Heart right ventricle (tissue), 16 donors: ENCODE measurements at regions of chr15 and their contacts with region 1.

Region 1: GRCh38 chr15:46865155-46865554 is 852.1 kb upstream of the SEMA6D start:
- DNase-seq: no peak
- ATAC-seq: peak in 6 of 8 donors; percentile 50 to 99 (median 80)
- H3K4me3 ChIP-seq: no peak overlapping the region
- H3K27ac ChIP-seq: peak overlapping the region in 1 of 10 donors; percentile 39
- H3K4me1 ChIP-seq: peaks cover 0 to 8% (median 0%) of the 10 kb centered on the region in 9 donors
- H3K27me3 ChIP-seq: no peaks in the 10 kb centered on the region
- CTCF ChIP-seq: no peak

Region 2: GRCh38 chr15:47158573-47158972 is 293.4 kb after region 1 on chr15:
- intact Hi-C with region 1: loop called in 1 of 10 experiments (anchors 10 kb)
- DNase-seq: no peak
- ATAC-seq: no peak
- H3K4me3 ChIP-seq: no peak overlapping the region
- H3K27ac ChIP-seq: no peak overlapping the region
- H3K4me1 ChIP-seq: no peaks in the 10 kb centered on the region
- H3K27me3 ChIP-seq: no peaks in the 10 kb centered on the region
- CTCF ChIP-seq: no peak